ENCODE measurements at regions of chr6 and their contacts with region 1.

Region 1: DNA sequence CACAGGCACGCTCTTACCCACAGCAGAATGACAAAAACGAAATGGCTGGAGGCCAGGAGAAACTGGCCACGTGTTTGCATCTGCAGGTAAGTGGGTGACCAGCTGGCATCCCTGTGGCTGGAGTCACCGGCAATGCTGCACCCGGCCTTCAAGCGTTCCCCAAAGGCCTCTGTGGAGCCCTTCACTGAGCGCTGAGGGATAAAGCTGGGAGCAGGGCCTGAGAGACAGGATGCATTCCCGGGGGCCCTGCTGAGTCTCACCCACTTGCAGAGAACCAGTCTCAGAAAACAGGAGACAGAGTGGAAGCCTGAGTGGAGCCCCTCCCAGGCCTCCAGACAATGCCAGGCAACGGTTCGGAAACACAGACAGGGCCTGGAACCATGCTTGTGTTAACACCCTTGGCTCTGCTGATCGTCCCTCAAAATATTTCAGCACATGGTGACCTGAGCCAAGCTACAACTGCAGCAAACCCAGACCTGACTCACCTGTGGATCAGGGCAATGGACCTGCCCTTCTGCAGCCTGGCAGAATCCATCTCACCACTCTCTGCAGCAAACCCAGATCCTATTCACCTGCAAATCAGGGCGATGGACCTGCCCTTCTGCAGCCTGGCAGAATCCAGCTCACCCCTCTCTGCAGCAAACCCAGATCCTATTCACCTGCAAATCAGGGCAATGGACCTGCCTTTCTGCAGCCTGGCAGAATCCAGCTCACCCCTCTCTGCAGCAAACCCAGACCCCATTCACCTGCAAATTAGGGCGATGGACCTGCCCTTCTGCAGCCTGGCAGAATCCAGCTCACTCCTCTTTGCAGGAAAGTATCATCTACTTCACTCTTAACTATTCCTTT is 39.8 kb downstream of the TBXT start:
- DNase-seq: no peak
- ATAC-seq: no peak
- H3K4me3 ChIP-seq: no peak overlapping the region
- H3K27ac ChIP-seq: no peak overlapping the region
- H3K4me1 ChIP-seq: no peaks in the 10 kb centered on the region
- H3K27me3 ChIP-seq: peaks cover 0 to 47% (median 21%) of the 10 kb centered on the region in 7 donors
- CTCF ChIP-seq: no peak

Region 2: DNA sequence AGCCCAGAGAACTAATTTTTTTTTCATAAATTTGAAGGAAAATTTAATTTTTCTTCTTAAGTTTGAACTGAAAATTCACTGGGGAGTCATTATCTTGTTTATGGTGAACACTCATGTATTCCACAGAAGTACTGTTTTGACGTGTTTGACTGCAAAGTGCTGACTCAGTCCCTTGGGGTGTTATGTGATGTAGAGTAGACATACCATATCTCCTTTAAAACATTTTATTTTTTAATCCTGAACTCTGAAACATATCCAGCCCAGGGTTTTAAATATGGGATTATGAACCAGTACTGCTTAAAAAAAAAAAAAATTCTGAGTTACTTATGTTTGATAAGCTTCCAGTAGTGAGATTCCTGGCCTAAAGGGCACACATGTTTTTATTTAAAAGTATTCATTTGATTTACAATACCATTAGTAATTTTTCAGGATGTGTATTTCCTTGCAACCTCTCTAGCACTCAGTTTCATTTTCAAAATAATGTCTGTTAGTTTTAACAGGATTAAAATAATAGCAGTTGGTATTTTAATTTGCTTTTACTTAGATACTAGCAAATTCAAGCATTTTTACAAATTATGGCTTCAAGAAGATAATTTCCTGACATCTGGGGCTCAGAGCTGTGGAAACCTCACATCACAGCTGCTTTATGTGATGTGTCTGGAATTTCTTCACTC is 383.2 kb before region 1 on chr6:
- intact Hi-C with region 1: no loop called
- DNase-seq: no peak
- ATAC-seq: no peak
- H3K4me3 ChIP-seq: no peak overlapping the region
- H3K27ac ChIP-seq: peak overlapping the region in 2 of 10 donors; percentile 11 to 17
- H3K4me1 ChIP-seq: peaks cover 0 to 13% (median 6%) of the 10 kb centered on the region in 9 donors
- H3K27me3 ChIP-seq: no peaks in the 10 kb centered on the region
- CTCF ChIP-seq: no peak

Region 3: GRCh38 chr6:166087246-166087645 is 40.6 kb before region 1 on chr6:
- intact Hi-C with region 1: loop called in 1 of 10 experiments (anchors 2 kb)
- DNase-seq: no peak
- ATAC-seq: no peak
- H3K4me3 ChIP-seq: no peak overlapping the region
- H3K27ac ChIP-seq: no peak overlapping the region
- H3K4me1 ChIP-seq: no peaks in the 10 kb centered on the region
- H3K27me3 ChIP-seq: peaks cover 0 to 11% (median 0%) of the 10 kb centered on the region in 7 donors
- CTCF ChIP-seq: no peak

Measured in heart right ventricle (tissue), 16 donors.